B cell (primary cell): ENCODE measurements at regions of chr1 and their contacts with region 1.

Region 1: GRCh38 chr1:31961536-31961935 is 23.4 kb upstream of the PTP4A2 start:
- DNase-seq: peak; percentile 53
- ATAC-seq: no peak
- H3K4me3 ChIP-seq: peak overlapping the region in 1 of 5 experiments; percentile 24
- H3K4me3 Mint-ChIP-seq: peak overlapping the region; percentile 45
- H3K27ac ChIP-seq: peak overlapping the region in 1 of 2 donors; percentile 75
- H3K27ac Mint-ChIP-seq: peak overlapping the region; percentile 86
- H3K4me1 ChIP-seq: peaks cover 21 to 33% of the 10 kb centered on the region in 2 donors
- H3K4me1 Mint-ChIP-seq: peaks cover 27% of the 10 kb centered on the region
- H3K27me3 ChIP-seq: no peaks in the 10 kb centered on the region
- H3K27me3 Mint-ChIP-seq: no peaks in the 10 kb centered on the region
- CTCF ChIP-seq: no peak

Region 2: GRCh38 chr1:31605908-31606427 is 355.6 kb before region 1 on chr1:
- CTCF ChIA-PET with region 1: no interaction called
- POLR2A ChIA-PET with region 1: no interaction called
- intact Hi-C with region 1: no loop called
- DNase-seq: peak; percentile 65
- ATAC-seq: peak; percentile 97
- H3K4me3 ChIP-seq: no peak overlapping the region
- H3K4me3 Mint-ChIP-seq: peak overlapping the region; percentile 27
- H3K27ac ChIP-seq: no peak overlapping the region
- H3K27ac Mint-ChIP-seq: peak overlapping the region; percentile 60
- H3K4me1 ChIP-seq: peaks cover 7 to 8% of the 10 kb centered on the region in 2 donors
- H3K4me1 Mint-ChIP-seq: peaks cover 13% of the 10 kb centered on the region
- H3K27me3 ChIP-seq: peaks cover 0 to 3% (median 0%) of the 10 kb centered on the region in 4 experiments
- H3K27me3 Mint-ChIP-seq: no peaks in the 10 kb centered on the region
- CTCF ChIP-seq: no peak

Region 3: GRCh38 chr1:31944205-31945089 is 17.1 kb before region 1 on chr1:
- CTCF ChIA-PET with region 1: interaction called, 433 read pairs
- POLR2A ChIA-PET with region 1: interaction called, 11 read pairs
- intact Hi-C with region 1: loop called (anchors 1 kb)
- DNase-seq: peak; percentile 82
- ATAC-seq: peak; percentile 83
- H3K4me3 ChIP-seq: peak overlapping the region; percentile 23 to 88 (median 66)
- H3K4me3 Mint-ChIP-seq: peak overlapping the region; percentile 90
- H3K27ac ChIP-seq: peak overlapping the region; percentile 87 to 88
- H3K27ac Mint-ChIP-seq: peak overlapping the region; percentile 96
- H3K4me1 ChIP-seq: peaks cover 41 to 46% of the 10 kb centered on the region in 2 donors
- H3K4me1 Mint-ChIP-seq: peaks cover 36% of the 10 kb centered on the region
- H3K27me3 ChIP-seq: no peaks in the 10 kb centered on the region
- H3K27me3 Mint-ChIP-seq: no peaks in the 10 kb centered on the region
- CTCF ChIP-seq: no peak

Region 4: GRCh38 chr1:32273388-32274208 is 312.1 kb after region 1 on chr1:
- CTCF ChIA-PET with region 1: no interaction called
- POLR2A ChIA-PET with region 1: no interaction called
- intact Hi-C with region 1: no loop called
- DNase-seq: peak; percentile 51
- ATAC-seq: peak; percentile 78
- H3K4me3 ChIP-seq: no peak overlapping the region
- H3K4me3 Mint-ChIP-seq: peak overlapping the region; percentile 53
- H3K27ac ChIP-seq: peak overlapping the region; percentile 52 to 63
- H3K27ac Mint-ChIP-seq: peak overlapping the region; percentile 86
- H3K4me1 ChIP-seq: peaks cover 20 to 26% of the 10 kb centered on the region in 2 donors
- H3K4me1 Mint-ChIP-seq: peaks cover 27% of the 10 kb centered on the region
- H3K27me3 ChIP-seq: no peaks in the 10 kb centered on the region
- H3K27me3 Mint-ChIP-seq: no peaks in the 10 kb centered on the region
- CTCF ChIP-seq: no peak

Region 5: GRCh38 chr1:32285658-32286057 is 324.1 kb after region 1 on chr1:
- CTCF ChIA-PET with region 1: no interaction called
- POLR2A ChIA-PET with region 1: no interaction called
- intact Hi-C with region 1: no loop called
- DNase-seq: no peak
- ATAC-seq: no peak
- H3K4me3 ChIP-seq: no peak overlapping the region
- H3K4me3 Mint-ChIP-seq: no peak overlapping the region
- H3K27ac ChIP-seq: no peak overlapping the region
- H3K27ac Mint-ChIP-seq: no peak overlapping the region
- H3K4me1 ChIP-seq: peaks cover under 1 to 2% of the 10 kb centered on the region in 2 donors
- H3K4me1 Mint-ChIP-seq: peaks cover 4% of the 10 kb centered on the region
- H3K27me3 ChIP-seq: no peaks in the 10 kb centered on the region
- H3K27me3 Mint-ChIP-seq: no peaks in the 10 kb centered on the region
- CTCF ChIP-seq: no peak